ENCODE measurements at regions of chr10 and their contacts with region 1.

Region 1: GRCh38 chr10:61903221-61903927 is 1.9 kb downstream of the ARID5B start:
- DNase-seq: peak; percentile 55
- ATAC-seq: peak; percentile 76 to 80

Region 2: DNA sequence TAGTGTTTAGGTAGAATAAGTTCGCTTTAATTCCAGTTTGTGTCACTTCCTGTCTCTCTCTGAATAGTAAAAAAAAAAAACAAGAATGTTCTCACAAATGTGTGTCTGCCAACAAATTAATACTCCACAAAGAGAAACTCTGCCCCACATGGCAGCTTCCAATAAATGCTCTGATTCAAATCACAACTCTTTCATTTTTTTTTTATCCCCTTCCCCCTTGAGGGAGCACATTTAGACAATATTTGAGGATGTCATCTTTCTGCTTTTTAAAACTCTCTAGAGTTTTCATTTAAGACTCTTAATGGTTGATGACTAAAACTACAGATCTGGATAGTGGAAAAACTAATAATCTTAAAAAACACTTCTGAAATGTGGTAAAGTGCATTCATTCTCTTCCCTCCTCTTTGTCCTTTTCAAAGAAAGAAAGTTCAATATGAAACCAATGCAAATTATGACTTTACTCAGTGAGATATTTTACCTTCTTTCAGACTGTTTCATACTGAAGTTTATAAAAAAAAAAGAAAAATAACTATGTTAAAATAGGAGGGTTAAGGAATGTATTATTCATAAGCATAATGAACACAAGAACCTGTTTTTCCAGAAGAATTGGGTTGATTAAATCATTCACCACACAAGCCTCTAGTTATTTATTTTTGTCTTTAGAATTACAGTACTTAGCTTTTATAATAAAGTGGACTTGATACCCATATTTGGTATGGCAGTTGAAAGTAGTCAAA is 40.5 kb after region 1 on chr10:
- intact Hi-C with region 1: loop called in 1 of 2 experiments (anchors 5 kb)
- DNase-seq: no peak
- ATAC-seq: peak; percentile 62 to 78

Region 3: DNA sequence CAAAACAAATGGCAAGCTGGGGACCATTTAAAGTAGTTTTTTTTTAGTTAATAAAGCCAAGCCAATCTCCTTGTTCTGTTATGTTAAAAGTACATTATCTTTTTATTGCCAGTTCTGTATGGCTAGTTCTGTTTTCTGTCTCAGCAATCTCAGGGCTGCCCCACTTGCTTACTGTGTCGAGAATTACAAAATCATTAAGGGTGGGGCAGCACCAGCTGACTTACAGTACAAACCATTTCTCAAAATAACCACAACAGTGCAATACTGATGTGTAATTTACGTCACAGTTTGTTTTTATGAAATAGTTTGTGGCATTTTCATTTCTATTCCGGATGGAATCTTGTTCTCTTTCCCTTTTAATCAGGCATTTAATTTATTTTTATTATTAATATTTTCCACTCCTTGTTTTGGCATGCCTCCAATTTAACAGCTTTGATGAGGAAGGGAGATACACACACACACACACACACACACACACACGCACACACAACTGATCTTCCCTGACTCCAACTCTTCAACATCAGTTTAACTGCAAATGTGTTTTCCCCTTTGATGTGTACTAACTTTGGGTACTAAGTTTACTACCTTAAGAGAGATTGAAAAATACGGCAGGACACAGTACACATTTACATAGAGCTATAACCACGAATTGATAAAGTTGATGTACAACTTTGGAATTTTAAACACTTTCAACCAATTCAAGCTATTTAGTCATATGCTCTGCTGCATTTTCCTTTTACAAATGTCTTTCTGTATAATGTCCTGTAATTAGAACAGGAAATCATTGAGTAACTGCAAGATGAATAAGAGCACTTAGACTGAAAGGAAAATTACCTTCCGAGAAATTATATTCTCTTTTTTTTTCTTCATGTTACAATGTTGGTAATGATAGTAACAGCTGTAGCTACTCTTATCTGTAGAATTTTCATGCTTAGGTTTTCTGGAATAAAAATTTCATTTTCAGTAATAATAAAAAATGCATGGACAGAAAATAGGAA is 89.6 kb after region 1 on chr10:
- intact Hi-C with region 1: loop called in 1 of 2 experiments (anchors 5 kb)
- DNase-seq: peak; percentile 55
- ATAC-seq: peak; percentile 90 to 97

Region 4: DNA sequence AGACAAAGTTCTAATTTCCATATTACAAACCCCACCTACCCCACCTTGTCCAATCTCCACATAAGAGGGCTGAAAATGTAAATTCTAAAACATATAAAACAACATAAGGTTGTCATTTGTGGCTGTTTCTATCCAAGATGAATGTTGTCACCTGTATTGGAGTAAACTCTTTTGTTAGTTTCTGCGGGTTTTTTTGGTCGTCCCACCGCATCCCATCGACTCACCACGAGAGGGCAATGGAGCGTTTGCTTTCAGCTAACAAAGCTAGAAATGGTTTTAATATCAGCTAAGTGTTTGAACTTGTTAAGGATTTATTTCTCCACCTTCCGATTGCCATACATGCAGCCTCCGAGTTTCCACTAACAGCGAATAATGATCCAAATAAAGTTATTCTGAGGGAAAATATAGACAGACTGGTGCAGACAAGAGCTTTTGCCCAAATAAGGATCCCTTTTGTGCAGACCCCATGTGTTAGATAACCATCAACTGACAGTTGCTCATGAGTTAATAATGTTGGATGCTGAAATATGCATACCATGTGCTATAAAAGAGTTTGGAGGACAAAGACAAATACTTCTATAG is 135.3 kb after region 1 on chr10:
- intact Hi-C with region 1: loop called (anchors 5 to 10 kb)
- DNase-seq: peak; percentile 76
- ATAC-seq: peak; percentile 64 to 74

Region 5: GRCh38 chr10:62244780-62245467 is 341.6 kb after region 1 on chr10:
- intact Hi-C with region 1: loop called in 1 of 2 experiments (anchors 5 kb)
- DNase-seq: no peak
- ATAC-seq: peak; percentile 81 to 82

Measured in left cardiac atrium (tissue), 4 donors.